Dorsolateral prefrontal cortex (tissue), 120 donors: ENCODE measurements at regions of chr5 and their contacts with region 1.

Region 1: GRCh38 chr5:73448463-73449136 is at the start of gene FOXD1:
- DNase-seq: peak in 2 of 10 donors; percentile 28 to 32
- H3K4me3 ChIP-seq: peak within 1 kb of the TSS in 56 of 59 donors; percentile 17 to 63 (median 44)
- H3K27ac ChIP-seq: peak within 1 kb of the TSS in 11 of 59 donors; percentile 9 to 78 (median 60)
- H3K27me3 ChIP-seq: peaks cover 13 to 96% (median 85%) of the 10 kb centered on the region in 45 donors
- CTCF ChIP-seq: no peak
- total RNA-seq, gene FOXD1: 0.46 to 10.1 (median 2.2) TPM

Region 2: DNA sequence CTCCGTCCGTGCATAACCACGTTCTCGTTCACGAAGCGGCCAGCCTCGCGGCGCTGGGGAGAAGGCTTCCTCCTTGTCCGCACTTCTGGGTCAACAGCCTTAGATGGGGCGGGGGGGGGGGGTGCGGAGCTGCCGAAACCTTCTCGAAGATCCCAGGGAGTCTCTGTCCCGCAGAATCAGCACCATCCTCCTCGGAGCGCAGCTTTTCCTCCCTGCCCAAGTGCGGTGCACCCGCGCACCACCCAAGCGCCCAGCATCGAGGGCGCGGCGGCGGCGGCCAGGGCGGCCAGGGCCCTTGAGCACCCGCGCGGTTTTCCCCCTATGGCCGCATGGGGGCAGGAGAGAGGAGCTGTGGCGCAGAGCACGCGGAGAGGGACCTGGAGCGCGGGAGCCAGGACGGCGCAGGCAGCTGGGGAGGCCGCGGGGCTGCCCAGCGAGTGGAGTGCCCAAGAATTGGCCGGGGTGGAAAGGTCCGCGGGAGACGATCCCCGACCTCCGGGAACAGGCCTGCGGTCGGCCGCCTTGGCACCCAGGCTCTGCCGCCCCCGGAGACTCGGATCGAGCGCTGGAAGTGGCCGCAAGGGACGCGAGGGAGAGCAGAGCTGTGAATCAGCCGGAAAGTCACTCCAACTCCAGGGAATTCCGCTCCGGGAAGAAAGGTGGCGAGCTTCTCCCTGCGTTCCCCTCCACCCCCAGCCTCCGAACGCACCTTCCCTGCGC is 232.5 kb before region 1 on chr5:
- intact Hi-C with region 1: loop called (anchors 2 to 10 kb)
- DNase-seq: peak in 8 of 10 donors; percentile 42 to 80 (median 59)
- H3K4me3 ChIP-seq: peak overlapping the region in 58 of 59 donors; percentile 8 to 61 (median 48)
- H3K27ac ChIP-seq: peak overlapping the region in 5 of 59 donors; percentile 2 to 31 (median 22)
- H3K27me3 ChIP-seq: peaks cover 0 to 95% (median 69%) of the 10 kb centered on the region in 45 donors
- CTCF ChIP-seq: peak; percentile 44 to 94 (median 83)

Region 3: DNA sequence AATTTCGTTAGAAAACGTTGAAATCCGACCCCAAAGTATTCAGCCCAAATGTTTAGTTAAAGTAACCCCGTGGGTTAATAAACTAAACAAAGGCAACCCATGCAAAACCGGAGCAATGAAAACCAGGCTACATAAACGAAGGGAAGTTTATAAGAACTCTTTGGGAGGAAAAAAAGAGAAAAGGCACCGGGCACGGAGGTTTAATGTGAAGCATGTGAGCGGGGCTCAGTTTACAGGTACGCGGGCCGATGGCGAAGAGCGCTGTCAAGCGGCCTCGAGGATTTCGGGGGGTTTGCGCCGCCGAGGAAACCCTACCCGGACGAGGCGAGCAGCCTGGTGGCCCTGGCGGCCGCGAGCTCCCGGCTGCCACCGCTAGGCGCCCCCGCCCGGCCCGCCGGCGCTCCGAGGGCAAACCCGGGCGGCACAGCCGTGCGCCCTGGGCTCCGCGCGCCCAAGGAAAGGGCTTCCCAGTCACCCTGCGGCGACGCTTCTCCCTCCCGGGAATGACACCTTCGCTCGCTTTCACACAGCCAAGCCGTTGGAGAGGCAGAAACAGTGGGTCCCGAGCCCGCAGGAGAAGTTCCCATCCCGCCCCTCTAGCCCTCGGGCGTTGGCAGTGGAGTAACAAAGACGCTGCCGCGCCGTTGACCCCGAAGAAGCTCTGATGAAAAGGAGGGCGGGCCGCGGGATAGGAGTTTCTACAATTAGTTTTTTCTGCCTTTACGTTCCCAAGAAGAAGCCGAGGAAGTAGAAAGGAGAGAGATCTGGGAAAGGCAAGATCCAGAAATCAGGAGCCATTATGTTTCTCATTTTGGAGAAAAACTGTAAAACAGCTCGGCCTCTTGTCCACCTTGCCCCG is 149.6 kb before region 1 on chr5:
- intact Hi-C with region 1: loop called in 1 of 2 experiments (anchors 10 kb)
- DNase-seq: no peak
- H3K4me3 ChIP-seq: peak overlapping the region in 30 of 59 donors; percentile 1 to 46 (median 27)
- H3K27ac ChIP-seq: no peak overlapping the region
- H3K27me3 ChIP-seq: peaks cover 25 to 100% (median 81%) of the 10 kb centered on the region in 45 donors
- CTCF ChIP-seq: peak in 9 of 56 donors; percentile 7 to 35 (median 23)

Region 4: DNA sequence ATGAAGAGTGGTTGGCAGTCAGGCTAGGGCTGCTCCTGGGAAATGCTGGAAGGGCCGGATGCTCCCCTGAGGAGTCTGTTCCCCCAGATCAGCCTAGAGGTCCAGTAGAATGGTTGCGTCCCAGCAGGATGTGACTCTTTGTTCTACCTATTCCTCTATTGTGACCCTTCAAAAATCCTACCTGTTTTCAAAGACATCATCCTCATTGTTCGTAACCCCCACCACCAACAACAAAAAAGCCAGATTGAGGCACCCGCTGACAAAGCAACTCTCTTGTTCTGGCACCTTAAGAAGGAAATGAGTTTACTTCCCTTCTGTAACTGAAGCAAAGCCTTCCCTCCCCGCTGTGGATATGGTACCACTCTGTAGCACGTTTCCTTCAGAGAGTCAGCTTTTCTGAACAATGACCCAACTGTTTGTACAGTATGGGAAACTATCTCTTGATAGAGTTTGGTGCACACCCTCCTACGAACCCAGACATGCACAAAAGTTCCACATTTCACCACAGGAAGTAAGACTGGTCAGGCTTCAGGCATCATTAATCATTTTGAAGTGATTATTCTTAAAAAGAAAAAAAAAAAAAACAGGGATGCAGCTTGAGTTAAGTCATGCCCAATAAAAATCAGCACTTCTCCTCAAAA is 984.8 kb after region 1 on chr5:
- intact Hi-C with region 1: no loop called
- DNase-seq: no peak
- H3K4me3 ChIP-seq: peak overlapping the region in 11 of 59 donors; percentile 2 to 33 (median 12)
- H3K27ac ChIP-seq: peak overlapping the region in 1 of 59 donors; percentile 12
- H3K27me3 ChIP-seq: no peaks in the 10 kb centered on the region
- CTCF ChIP-seq: no peak